ENCODE measurements at regions of chr6 and their contacts with region 1.

Region 1: GRCh38 chr6:33620856-33621710 is at the start of gene ITPR3:
- DNase-seq: peak; percentile 63 to 88 (median 77)
- ATAC-seq: peak; percentile 80 to 84
- H3K4me3 Mint-ChIP-seq: peak within 1 kb of the TSS; percentile 86 to 98 (median 94)
- H3K27ac Mint-ChIP-seq: peak within 1 kb of the TSS; percentile 82 to 98 (median 92)
- H3K4me1 Mint-ChIP-seq: peaks cover 28 to 72% (median 52%) of the 10 kb centered on the region in 4 donors
- H3K27me3 Mint-ChIP-seq: no peaks in the 10 kb centered on the region
- polyA plus RNA-seq, gene ITPR3: 0.98 to 4.9 (median 2.4) TPM

Region 2: GRCh38 chr6:33570806-33571636 is 50.1 kb before region 1 on chr6:
- POLR2A ChIA-PET with region 1: interaction called, 16 read pairs
- DNase-seq: peak; percentile 82 to 97 (median 96)
- ATAC-seq: peak; percentile 89 to 91
- H3K4me3 Mint-ChIP-seq: peak overlapping the region; percentile 84 to 97 (median 96)
- H3K27ac Mint-ChIP-seq: peak overlapping the region; percentile 99 to 100 (median 100)
- H3K4me1 Mint-ChIP-seq: peaks cover 16 to 35% (median 29%) of the 10 kb centered on the region in 4 donors
- H3K27me3 Mint-ChIP-seq: no peaks in the 10 kb centered on the region

Region 3: DNA sequence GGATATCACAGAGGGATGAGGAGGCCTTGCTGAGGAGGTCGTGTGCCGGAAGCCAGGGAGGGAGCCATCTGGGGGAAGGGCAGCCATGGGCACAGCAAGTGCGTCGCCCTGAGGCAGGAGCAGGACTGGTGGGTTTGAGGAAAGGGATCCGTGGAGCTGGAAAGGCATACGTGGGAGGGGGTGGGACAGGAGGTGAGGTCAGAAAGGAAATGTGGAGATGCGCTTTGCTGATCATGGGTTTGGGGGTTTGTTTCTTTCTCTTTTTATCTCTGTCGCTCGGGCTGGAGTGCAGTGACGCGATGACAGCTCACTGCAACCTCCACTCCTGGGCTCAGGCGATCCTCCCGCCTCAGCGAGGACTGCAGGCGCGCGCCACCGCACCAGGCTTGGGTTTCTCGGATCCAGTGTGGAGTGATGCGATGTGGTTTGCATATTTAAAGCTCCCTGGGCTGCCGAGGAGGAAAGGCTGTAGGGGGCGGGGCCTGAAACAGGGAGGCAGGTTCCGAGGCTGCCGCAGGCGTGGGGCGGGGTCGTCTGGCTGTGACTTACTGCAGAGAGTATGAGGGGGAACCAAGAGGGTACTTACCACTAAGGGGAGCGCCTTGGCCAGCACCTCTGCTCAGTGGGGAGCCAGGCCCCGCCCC is 28.6 kb before region 1 on chr6:
- POLR2A ChIA-PET with region 1: interaction called, 21 read pairs
- DNase-seq: peak; percentile 40 to 82 (median 54)
- ATAC-seq: peak; percentile 71 to 73
- H3K4me3 Mint-ChIP-seq: peak overlapping the region; percentile 72 to 90 (median 86)
- H3K27ac Mint-ChIP-seq: peak overlapping the region; percentile 85 to 98 (median 95)
- H3K4me1 Mint-ChIP-seq: peaks cover 14 to 47% (median 37%) of the 10 kb centered on the region in 4 donors
- H3K27me3 Mint-ChIP-seq: no peaks in the 10 kb centered on the region

Region 4: GRCh38 chr6:33633462-33634158 is 12.5 kb after region 1 on chr6:
- POLR2A ChIA-PET with region 1: interaction called, 35 read pairs
- DNase-seq: peak in 9 of 10 donors; percentile 30 to 71 (median 52)
- ATAC-seq: peak; percentile 76 to 81
- H3K4me3 Mint-ChIP-seq: peak overlapping the region; percentile 82 to 92 (median 88)
- H3K27ac Mint-ChIP-seq: peak overlapping the region; percentile 19 to 90 (median 86)
- H3K4me1 Mint-ChIP-seq: peaks cover 37 to 74% (median 56%) of the 10 kb centered on the region in 4 donors
- H3K27me3 Mint-ChIP-seq: no peaks in the 10 kb centered on the region

Region 5: DNA sequence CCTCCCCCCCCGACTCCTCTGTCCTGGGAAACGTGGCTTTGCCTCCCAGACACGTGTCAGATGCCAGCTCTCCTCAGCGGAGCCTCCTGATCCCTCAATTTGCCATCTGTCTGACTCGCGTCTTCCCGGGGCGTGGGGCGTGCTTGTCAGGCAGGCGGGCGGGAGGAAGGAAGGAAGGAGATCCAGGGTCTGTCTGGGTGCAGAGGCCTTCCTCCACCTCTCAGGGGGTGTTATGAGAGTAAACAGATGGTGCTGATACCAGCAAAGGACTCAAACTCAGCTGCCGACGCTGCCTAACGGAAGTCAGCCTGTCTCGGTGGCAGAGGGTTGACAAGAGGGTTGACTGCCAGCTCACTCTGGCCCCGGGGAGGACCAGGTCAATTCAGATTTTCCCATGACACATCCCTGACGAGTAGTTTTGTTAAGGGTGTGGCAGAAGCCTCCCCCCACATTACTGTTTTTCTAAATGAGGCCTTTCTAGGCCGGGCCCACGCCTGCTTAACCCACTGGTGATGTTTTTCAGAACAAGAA is 73.4 kb after region 1 on chr6:
- POLR2A ChIA-PET with region 1: interaction called, 25 read pairs
- DNase-seq: peak in 9 of 10 donors; percentile 32 to 78 (median 53)
- ATAC-seq: peak; percentile 54 to 77
- H3K4me3 Mint-ChIP-seq: peak overlapping the region; percentile 45 to 81 (median 74)
- H3K27ac Mint-ChIP-seq: peak overlapping the region; percentile 95 to 99 (median 97)
- H3K4me1 Mint-ChIP-seq: peaks cover 25 to 71% (median 70%) of the 10 kb centered on the region in 4 donors
- H3K27me3 Mint-ChIP-seq: no peaks in the 10 kb centered on the region